Breast epithelium (tissue), 4 donors: ENCODE measurements at regions of chr9 and their contacts with region 1.

Region 1: DNA sequence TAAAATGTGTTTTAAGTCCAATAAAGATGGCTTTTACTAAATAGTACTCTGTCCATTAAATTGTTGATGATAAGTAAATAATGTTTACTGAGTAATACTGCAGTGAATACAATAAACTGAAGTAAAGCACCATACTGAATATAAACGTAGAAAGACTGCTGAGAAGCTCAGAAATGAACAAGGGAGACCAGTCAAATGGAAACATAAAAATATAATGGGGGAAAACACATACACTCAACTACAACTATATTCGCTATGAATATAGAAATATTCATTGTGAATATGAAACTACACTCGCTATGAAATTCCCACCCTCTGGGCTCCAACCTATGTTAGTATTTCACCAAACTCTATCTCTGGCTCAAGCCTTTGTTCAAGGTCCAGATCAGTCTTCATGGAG is 41.9 kb upstream of the UBQLN1 start:
- DNase-seq: no peak
- H3K4me3 ChIP-seq: no peak overlapping the region
- H3K27ac ChIP-seq: no peak overlapping the region
- H3K4me1 ChIP-seq: no peaks in the 10 kb centered on the region
- H3K27me3 ChIP-seq: no peaks in the 10 kb centered on the region
- CTCF ChIP-seq: no peak
- POLR2A ChIP-seq: no peak

Region 2: GRCh38 chr9:83775932-83776331 is 26.2 kb after region 1 on chr9:
- intact Hi-C with region 1: no loop called
- DNase-seq: no peak
- H3K4me3 ChIP-seq: no peak overlapping the region
- H3K27ac ChIP-seq: no peak overlapping the region
- H3K4me1 ChIP-seq: no peaks in the 10 kb centered on the region
- H3K27me3 ChIP-seq: no peaks in the 10 kb centered on the region
- CTCF ChIP-seq: no peak
- POLR2A ChIP-seq: no peak

Region 3: DNA sequence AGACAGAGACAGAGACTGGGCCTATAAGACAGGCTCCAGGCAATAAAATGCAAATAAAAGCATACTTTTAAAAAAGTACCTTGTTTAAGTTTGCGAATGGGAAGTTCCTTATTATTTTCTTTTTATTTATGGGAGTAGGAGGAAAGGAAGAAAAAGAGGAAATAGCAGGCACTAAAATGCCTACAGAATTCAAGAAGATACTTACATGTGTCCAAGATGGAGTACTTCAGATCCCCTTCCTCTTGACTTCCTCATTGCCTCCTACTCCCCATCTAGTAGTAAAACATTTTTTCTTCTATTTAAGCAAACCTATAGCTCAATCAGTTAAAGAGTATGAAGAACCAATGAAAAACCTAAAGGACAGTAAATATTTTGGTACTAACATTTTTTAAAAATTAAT is 43.0 kb after region 1 on chr9:
- intact Hi-C with region 1: loop called (anchors 2 kb)
- DNase-seq: no peak
- H3K4me3 ChIP-seq: no peak overlapping the region
- H3K27ac ChIP-seq: no peak overlapping the region
- H3K4me1 ChIP-seq: no peaks in the 10 kb centered on the region
- H3K27me3 ChIP-seq: no peaks in the 10 kb centered on the region
- CTCF ChIP-seq: no peak
- POLR2A ChIP-seq: no peak